ENCODE measurements at regions of chr4 and their contacts with region 1.

Region 1: DNA sequence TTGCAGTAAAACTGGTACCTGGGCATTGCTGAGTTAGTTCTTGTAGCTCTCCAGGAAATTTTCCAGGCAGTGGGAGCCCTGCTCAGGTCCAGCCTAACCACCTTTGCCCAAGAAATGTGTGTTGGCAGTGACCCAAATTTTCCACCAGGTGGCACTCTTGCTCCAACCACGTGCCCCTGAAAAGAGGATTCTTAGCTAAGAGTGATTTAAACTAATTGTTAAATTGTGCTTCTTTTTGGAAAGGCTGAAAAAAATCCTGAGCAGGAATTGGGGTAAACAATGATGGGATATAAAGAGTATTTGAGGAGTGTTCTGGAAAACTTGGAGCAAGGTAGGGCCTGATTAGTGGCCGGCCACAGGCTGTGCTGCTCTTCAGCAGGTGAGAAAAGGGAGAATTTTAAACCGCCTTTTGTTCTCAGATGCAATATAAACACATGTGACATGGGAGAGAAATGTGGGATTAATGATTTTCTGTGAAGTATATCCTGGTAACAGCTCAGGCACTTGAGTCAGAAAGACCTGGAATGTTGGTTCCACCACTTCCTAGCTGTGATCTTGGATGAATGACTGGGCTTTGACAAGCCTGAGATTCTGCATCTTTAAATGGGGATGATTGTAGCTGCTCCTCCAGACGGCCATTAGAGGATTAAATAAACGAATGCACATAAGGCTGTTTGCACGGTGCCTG is 219.6 kb downstream of the PTTG2 start:
- DNase-seq: peak; percentile 87 to 93
- H3K4me3 ChIP-seq: no peak overlapping the region
- H3K27ac ChIP-seq: peak overlapping the region in 3 of 5 donors; percentile 36 to 85 (median 47)
- H3K4me1 ChIP-seq: peaks cover 16 to 51% (median 28%) of the 10 kb centered on the region in 4 donors
- H3K27me3 ChIP-seq: no peaks in the 10 kb centered on the region
- CTCF ChIP-seq: peak in 5 of 7 experiments; percentile 71 to 91 (median 87)
- EP300 ChIP-seq: no peak
- POLR2A ChIP-seq: no peak

Region 2: GRCh38 chr4:38062088-38062893 is 117.5 kb before region 1 on chr4:
- intact Hi-C with region 1: loop called (anchors 10 kb)
- DNase-seq: peak; percentile 87 to 95
- H3K4me3 ChIP-seq: peak overlapping the region; percentile 21 to 40 (median 32)
- H3K27ac ChIP-seq: peak overlapping the region in 4 of 5 donors; percentile 66 to 81 (median 72)
- H3K4me1 ChIP-seq: peaks cover 0 to 47% (median 15%) of the 10 kb centered on the region in 4 donors
- H3K27me3 ChIP-seq: no peaks in the 10 kb centered on the region
- CTCF ChIP-seq: peak in 5 of 7 experiments; percentile 65 to 90 (median 79)
- EP300 ChIP-seq: no peak
- POLR2A ChIP-seq: no peak

Region 3: DNA sequence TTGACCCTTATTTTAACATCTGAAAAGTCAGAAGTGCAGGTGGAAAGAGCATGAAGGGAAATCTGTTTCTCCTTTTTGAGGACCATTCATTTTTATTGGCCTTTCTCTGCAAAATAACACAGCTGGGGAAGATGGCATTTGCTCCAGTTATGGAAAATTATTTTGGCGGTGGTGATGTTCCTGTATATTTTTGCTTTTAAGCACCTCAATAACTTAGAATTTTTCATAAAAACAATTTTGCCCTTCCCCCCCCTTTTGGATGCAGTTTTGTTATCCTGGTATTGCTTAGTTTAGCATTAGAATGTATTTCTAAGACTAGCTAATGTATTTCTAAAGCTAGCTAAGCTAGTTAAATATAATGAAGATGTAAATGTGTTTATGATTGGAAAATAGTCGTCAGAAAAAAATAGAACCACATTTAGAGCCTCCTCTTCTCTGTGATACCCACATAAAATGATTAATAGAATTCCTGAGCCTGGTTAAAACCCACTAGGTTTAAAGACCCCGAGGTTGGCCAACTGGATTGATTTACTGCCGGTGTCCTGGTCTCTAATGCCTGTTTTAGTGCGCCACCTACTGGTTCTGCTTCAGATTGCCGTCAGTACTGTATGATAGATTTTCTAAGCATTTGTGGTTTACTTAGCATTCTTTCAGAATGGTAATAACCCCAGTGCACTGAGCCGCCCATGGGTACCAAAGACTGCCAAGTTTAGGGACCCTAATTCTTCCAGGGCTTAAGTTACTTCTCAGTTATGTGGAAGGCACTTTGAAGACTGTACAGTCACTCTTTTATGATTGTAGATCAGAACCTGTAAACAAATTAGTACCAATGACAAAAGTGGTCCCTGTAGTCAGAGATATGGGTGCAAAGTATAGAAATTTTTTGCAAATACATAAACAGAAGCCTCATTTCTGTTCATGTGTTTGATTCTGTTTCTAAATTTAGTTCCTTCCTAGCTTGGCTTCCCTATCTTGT is 495.6 kb after region 1 on chr4:
- intact Hi-C with region 1: loop called (anchors 10 kb)
- DNase-seq: peak; percentile 86 to 94
- H3K4me3 ChIP-seq: peak overlapping the region in 1 of 4 donors; percentile 2
- H3K27ac ChIP-seq: peak overlapping the region; percentile 24 to 100 (median 97)
- H3K4me1 ChIP-seq: peaks cover 72 to 100% (median 90%) of the 10 kb centered on the region in 4 donors
- H3K27me3 ChIP-seq: no peaks in the 10 kb centered on the region
- CTCF ChIP-seq: peak in 6 of 7 experiments; percentile 35 to 91 (median 88)
- EP300 ChIP-seq: no peak
- POLR2A ChIP-seq: no peak

Region 4: GRCh38 chr4:38730830-38731646 is 551.2 kb after region 1 on chr4:
- intact Hi-C with region 1: loop called (anchors 5 kb)
- DNase-seq: peak; percentile 88
- H3K4me3 ChIP-seq: no peak overlapping the region
- H3K27ac ChIP-seq: no peak overlapping the region
- H3K4me1 ChIP-seq: peaks cover 0 to 23% (median 21%) of the 10 kb centered on the region in 4 donors
- H3K27me3 ChIP-seq: no peaks in the 10 kb centered on the region
- CTCF ChIP-seq: peak in 6 of 7 experiments; percentile 83 to 98 (median 93)
- EP300 ChIP-seq: no peak
- POLR2A ChIP-seq: no peak

Measured in stomach (tissue), 19 donors.